Activated T-helper 1 cell treated with anti-CD3 and anti-CD28 coated beads, Interleukin-12 subunit alpha, Interleukin-12 subunit beta, Interleukin-2, Interleukin-4 antibody, amounts not matched to agents 30 ng/mL and 10 ng/mL and 1 ng/mL, durations not matched to agents 14 hours and 24 hours and 36 hours (primary cell): ENCODE measurements at regions of chr21 and their contacts with region 1.

Region 1: DNA sequence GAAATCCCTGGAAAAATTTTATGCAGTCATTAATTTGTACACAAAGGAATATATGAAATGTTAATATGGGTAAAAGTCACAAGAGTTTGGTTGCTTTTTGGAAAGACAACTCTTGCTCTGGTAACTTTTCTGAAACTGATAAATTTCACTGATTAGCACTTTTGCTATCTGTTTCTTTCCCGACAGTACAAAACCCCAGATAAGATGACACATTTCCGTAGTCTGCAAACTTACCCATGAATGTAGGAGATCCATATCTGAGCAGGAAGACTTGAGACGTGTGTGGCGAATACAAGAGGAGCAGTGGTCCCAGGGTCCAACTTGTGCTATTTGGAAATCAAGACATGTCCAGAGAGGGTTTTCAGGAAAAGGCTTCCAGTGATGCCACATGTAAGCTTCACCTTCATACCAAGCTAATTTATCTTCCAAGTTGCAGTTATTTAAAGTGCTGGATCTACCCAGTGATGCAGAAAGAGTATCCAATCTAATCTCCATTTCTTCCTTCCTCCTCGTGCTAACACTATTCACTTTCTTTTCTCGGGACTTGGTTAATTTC is 35.9 kb upstream of the SAMSN1 start:
- DNase-seq: no peak
- H3K4me3 Mint-ChIP-seq: peak overlapping the region; percentile 9
- H3K27ac Mint-ChIP-seq: peak overlapping the region; percentile 7
- H3K4me1 Mint-ChIP-seq: peaks cover 58% of the 10 kb centered on the region
- H3K27me3 Mint-ChIP-seq: no peaks in the 10 kb centered on the region

Region 2: DNA sequence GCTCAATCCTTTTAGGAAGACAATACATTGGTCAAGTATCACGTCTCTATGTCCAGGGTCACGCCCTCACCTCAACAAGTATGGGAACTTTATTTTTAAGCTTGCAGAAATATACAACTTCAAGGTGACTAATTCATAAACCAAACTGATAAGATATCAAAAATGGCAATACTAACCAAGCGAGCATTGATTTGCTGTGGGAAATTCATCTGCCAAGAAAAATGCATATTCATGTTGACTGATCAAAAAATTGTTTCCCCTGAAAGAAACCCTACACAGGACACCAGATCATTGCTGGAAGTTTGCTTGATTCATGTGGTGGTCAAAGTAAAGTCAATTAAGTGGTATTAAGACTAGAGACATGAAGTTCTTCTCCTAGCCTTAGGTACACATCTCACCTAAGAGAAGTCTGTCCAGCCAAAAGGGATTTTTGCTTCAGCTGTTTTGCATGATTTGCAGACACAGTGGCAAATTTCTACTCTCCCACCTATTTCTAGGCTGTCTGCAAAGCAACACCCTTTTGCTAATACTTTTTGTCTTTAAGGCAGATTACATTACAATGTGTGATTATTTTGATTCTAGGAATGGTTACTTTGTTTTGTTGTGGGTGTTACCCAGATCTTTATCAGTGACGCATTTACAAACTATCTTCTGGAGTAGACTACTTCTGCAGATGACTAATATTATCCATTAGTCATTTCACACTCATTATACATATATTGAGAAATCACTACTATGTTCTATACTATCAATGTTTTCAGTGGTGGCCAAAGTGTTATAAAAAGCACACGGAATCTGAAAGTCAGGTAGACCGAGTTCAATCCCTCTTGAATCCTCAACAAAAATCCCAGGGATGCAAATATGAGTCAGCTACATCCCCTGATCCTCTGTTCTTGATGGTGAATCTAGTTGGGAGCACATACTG is 48.2 kb before region 1 on chr21:
- intact Hi-C with region 1: loop called (anchors 1 kb)
- DNase-seq: peak; percentile 22
- H3K4me3 Mint-ChIP-seq: peak overlapping the region; percentile 86
- H3K27ac Mint-ChIP-seq: peak overlapping the region; percentile 99
- H3K4me1 Mint-ChIP-seq: peaks cover 79% of the 10 kb centered on the region
- H3K27me3 Mint-ChIP-seq: no peaks in the 10 kb centered on the region

Region 3: GRCh38 chr21:14630556-14631069 is 48.6 kb after region 1 on chr21:
- intact Hi-C with region 1: no loop called
- DNase-seq: no peak
- H3K4me3 Mint-ChIP-seq: no peak overlapping the region
- H3K27ac Mint-ChIP-seq: peak overlapping the region; percentile 72
- H3K4me1 Mint-ChIP-seq: peaks cover 14% of the 10 kb centered on the region
- H3K27me3 Mint-ChIP-seq: peaks cover 2% of the 10 kb centered on the region